CD4-positive, alpha-beta memory T cell (primary cell): ENCODE measurements at regions of chr17 and their contacts with region 1.

Region 1: DNA sequence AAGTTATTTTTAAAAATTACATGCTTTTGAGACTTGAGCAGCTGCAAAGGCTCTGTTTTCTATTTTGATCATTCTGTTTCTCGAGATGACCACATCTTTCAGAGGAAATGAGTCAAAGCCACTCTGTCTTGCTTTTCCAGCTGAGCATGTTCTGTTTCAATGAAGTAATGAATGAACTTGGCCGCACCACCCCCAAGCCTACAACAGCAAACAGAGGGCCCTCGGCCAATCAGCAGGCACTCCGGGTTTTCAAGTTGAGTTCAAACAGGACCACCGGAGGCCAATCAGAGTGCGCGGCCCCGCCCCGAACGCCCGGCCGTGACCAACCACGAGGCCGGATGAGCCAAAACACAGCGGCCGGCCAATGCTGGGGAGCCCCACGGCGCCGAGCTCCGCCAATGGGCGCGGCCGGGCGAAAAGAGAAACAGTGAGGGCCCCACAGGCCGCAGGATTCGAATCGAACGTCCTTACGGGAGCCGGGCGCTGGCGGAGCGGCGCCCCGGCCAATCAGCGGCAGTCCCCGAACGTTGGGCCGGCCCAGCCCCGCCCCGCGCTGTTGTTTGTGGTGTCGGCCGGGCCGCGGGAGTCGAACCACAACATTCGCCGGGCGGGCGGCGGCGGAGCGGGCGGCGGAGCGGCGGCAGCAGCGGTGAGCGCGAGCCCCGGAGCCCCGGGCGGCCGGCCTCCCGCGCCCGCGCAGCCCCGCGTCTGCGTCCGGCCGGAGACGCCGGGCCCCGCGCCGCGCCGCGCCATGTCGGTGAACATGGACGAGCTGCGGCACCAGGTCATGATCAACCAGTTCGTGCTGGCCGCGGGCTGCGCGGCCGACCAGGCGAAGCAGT is at the start of gene UBALD2:
- DNase-seq: peak; percentile 99
- H3K4me3 ChIP-seq: peak within 1 kb of the TSS; percentile 94 to 100
- H3K4me3 Mint-ChIP-seq: peak within 1 kb of the TSS; percentile 89 to 95 (median 92)
- H3K27ac ChIP-seq: peak within 1 kb of the TSS; percentile 82
- H3K27ac Mint-ChIP-seq: peak within 1 kb of the TSS; percentile 93 to 98 (median 96)
- H3K4me1 ChIP-seq: peaks cover 57% of the 10 kb centered on the region
- H3K4me1 Mint-ChIP-seq: peaks cover 33 to 69% (median 52%) of the 10 kb centered on the region in 4 donors
- H3K27me3 ChIP-seq: no peaks in the 10 kb centered on the region
- H3K27me3 Mint-ChIP-seq: no peaks in the 10 kb centered on the region
- total RNA-seq, gene UBALD2: 101 to 103 TPM

Region 2: DNA sequence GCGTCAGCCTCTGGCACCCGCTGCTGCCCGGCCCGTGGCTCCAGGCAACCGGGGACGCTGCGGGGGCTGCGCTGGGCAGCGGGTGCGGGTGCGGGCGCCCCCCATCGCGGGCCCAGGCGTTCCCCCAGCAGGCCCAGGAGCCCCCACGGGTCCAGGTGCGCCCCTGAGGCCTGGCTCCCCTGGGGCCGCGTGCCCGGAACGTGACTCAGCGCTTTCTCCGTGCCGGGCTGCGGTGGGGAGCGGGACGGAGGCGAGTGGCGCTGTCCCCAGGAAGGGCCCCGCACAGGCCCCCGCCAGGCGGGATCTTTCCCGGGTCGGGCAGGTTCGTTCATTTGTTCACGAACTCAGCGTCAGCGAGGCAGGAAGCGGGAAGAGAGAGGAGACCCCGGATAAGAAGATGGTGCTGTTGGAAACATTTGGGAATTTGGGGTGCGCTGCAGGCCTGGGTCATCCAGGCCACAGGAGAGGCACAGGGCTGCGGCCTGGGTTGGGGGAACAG is 143.0 kb before region 1 on chr17:
- CTCF ChIA-PET with region 1: interaction called, 8 read pairs
- POLR2A ChIA-PET with region 1: interaction called, 108 read pairs
- intact Hi-C with region 1: no loop called
- DNase-seq: no peak
- H3K4me3 ChIP-seq: peak overlapping the region in 1 of 2 donors; percentile 60
- H3K4me3 Mint-ChIP-seq: peak overlapping the region in 4 of 8 donors; percentile 21 to 49 (median 37)
- H3K27ac ChIP-seq: peak overlapping the region; percentile 29
- H3K27ac Mint-ChIP-seq: peak overlapping the region in 6 of 7 donors; percentile 21 to 86 (median 65)
- H3K4me1 ChIP-seq: peaks cover 10% of the 10 kb centered on the region
- H3K4me1 Mint-ChIP-seq: peaks cover 4 to 12% (median 8%) of the 10 kb centered on the region in 4 donors
- H3K27me3 ChIP-seq: no peaks in the 10 kb centered on the region
- H3K27me3 Mint-ChIP-seq: no peaks in the 10 kb centered on the region

Region 3: DNA sequence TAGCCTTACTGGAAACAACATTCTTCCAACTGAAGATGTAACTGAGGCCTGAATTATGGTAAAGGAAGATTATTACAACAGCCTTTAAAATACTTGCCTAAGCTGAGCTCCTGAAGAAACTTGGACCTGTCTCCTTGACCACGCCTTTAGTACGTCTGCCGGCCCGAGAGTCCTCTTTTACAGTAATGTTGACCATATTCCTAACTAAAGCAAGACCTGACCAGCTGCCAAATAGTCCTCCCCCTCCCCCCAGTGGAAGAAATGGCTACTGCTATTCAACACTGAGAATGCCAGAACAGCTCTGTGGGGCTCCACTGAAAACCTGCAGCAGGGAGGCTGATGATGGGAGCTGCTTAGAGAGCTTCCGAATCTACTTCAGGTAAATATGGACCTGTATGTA is 111.3 kb before region 1 on chr17:
- CTCF ChIA-PET with region 1: interaction called, 3 read pairs
- POLR2A ChIA-PET with region 1: interaction called, 25 read pairs
- intact Hi-C with region 1: no loop called
- DNase-seq: no peak
- H3K4me3 ChIP-seq: no peak overlapping the region
- H3K4me3 Mint-ChIP-seq: no peak overlapping the region
- H3K27ac ChIP-seq: no peak overlapping the region
- H3K27ac Mint-ChIP-seq: peak overlapping the region in 6 of 7 donors; percentile 22 to 79 (median 65)
- H3K4me1 ChIP-seq: peaks cover 24% of the 10 kb centered on the region
- H3K4me1 Mint-ChIP-seq: peaks cover 29 to 49% (median 35%) of the 10 kb centered on the region in 4 donors
- H3K27me3 ChIP-seq: no peaks in the 10 kb centered on the region
- H3K27me3 Mint-ChIP-seq: no peaks in the 10 kb centered on the region

Region 4: GRCh38 chr17:76204277-76204676 is 60.7 kb before region 1 on chr17:
- CTCF ChIA-PET with region 1: interaction called, 4 read pairs
- POLR2A ChIA-PET with region 1: interaction called, 80 read pairs
- intact Hi-C with region 1: no loop called
- DNase-seq: no peak
- H3K4me3 ChIP-seq: no peak overlapping the region
- H3K4me3 Mint-ChIP-seq: no peak overlapping the region
- H3K27ac ChIP-seq: no peak overlapping the region
- H3K27ac Mint-ChIP-seq: peak overlapping the region in 4 of 7 donors; percentile 53 to 70 (median 56)
- H3K4me1 ChIP-seq: peaks cover 73% of the 10 kb centered on the region
- H3K4me1 Mint-ChIP-seq: peaks cover 41 to 75% (median 63%) of the 10 kb centered on the region in 4 donors
- H3K27me3 ChIP-seq: no peaks in the 10 kb centered on the region
- H3K27me3 Mint-ChIP-seq: no peaks in the 10 kb centered on the region

Region 5: DNA sequence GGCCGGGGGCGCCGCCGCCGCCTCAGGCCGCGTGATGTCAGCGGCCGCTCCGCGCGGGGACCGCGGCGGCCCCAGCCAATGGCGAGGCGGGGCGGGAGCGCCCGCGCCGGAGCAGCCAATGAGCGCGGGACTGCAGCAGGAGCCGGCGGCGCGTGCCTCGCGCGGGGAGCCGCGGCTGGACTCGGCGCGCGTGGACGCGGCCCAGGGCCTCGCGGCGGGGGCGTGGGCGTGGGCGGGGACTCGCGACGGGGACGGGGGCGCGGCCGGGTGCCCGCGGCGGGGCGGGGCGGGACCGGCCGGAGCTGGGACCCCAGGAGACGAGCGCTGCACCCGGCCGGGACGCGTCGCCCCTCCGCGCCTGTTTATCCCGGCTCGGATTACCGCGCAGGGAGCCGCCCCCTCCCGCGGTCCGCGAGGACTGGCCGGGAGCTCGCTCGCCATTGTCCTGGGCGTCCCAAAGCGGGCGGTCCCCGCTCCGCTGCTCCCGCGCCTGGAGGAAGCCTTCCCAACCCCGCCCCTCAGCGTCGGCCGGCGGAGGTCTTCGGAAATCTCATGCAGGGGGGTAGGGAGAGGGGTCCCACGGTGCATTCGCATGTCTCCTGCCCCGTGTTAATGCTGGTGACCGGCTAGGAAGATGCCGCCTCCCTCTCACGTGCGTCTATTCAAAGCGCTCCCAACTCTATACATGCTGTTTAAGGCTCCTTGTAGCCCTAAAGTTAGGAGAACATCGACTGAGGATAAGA is 24.3 kb before region 1 on chr17 and contains the start of gene RNF157:
- CTCF ChIA-PET with region 1: interaction called, 5 read pairs
- POLR2A ChIA-PET with region 1: interaction called, 620 read pairs
- intact Hi-C with region 1: no loop called
- DNase-seq: peak; percentile 61 to 76 (median 72)
- H3K4me3 ChIP-seq: peak within 1 kb of the TSS; percentile 70 to 71
- H3K4me3 Mint-ChIP-seq: peak within 1 kb of the TSS; percentile 89 to 98 (median 92)
- H3K27ac ChIP-seq: peak within 1 kb of the TSS; percentile 50
- H3K27ac Mint-ChIP-seq: peak within 1 kb of the TSS; percentile 86 to 96 (median 93)
- H3K4me1 ChIP-seq: peaks cover 51% of the 10 kb centered on the region
- H3K4me1 Mint-ChIP-seq: peaks cover 19 to 72% (median 47%) of the 10 kb centered on the region in 4 donors
- H3K27me3 ChIP-seq: no peaks in the 10 kb centered on the region
- H3K27me3 Mint-ChIP-seq: no peaks in the 10 kb centered on the region
- total RNA-seq, gene RNF157: 19.5 to 22.5 TPM

Region 6: DNA sequence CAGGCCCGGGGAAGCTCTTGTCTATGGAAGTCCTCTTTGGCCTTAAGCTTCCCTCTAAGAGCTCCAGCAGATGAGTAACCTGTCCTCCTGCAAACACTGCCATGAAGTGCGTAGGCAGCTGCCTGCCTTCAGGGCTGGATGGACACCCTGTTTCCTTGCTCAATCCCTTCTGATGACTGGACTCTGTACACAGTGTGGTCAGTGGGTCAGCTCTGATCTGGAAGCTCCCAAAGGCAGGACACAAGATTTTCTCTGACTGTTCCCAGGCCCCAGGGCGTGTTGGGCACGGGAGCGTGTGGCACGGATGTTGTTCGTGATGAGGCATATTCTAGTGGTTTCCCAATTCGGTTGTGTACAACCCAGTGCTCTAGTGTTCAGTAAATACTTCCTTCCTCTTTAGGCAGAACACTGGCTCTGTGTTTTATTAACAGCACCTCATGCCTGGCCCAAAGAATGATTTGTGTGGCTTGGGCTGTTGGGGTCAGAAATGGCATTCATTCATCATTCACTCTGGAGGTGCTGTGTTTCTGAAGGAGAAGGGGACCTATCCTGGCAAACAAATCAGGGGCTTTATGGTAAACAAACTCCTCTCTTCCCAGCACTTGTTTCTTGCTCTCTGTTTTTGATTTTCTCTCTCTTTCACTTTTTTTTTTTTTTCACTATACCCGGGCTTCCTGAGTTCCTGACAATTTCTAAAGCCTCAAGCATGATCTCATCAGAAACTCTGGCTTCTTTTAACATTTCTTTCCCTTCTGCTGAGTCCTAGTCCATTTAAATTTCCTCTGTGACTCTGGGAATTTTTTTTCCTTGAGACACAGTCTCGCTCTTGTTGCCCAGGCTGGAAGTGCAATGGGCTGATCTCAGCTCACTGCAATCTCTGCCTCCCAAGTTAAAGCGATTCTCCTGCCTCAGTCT is 12.7 kb before region 1 on chr17:
- CTCF ChIA-PET with region 1: interaction called, 27 read pairs
- POLR2A ChIA-PET with region 1: interaction called, 620 read pairs
- intact Hi-C with region 1: no loop called
- DNase-seq: peak in 3 of 5 donors; percentile 55 to 57 (median 55)
- H3K4me3 ChIP-seq: peak overlapping the region; percentile 3 to 5
- H3K4me3 Mint-ChIP-seq: peak overlapping the region; percentile 69 to 89 (median 81)
- H3K27ac ChIP-seq: peak overlapping the region; percentile 51
- H3K27ac Mint-ChIP-seq: peak overlapping the region; percentile 82 to 97 (median 96)
- H3K4me1 ChIP-seq: peaks cover 68% of the 10 kb centered on the region
- H3K4me1 Mint-ChIP-seq: peaks cover 31 to 71% (median 53%) of the 10 kb centered on the region in 4 donors
- H3K27me3 ChIP-seq: no peaks in the 10 kb centered on the region
- H3K27me3 Mint-ChIP-seq: no peaks in the 10 kb centered on the region

Region 7: GRCh38 chr17:76327696-76328095 is 62.7 kb after region 1 on chr17:
- CTCF ChIA-PET with region 1: no interaction called
- POLR2A ChIA-PET with region 1: no interaction called
- intact Hi-C with region 1: no loop called
- DNase-seq: no peak
- H3K4me3 ChIP-seq: no peak overlapping the region
- H3K4me3 Mint-ChIP-seq: no peak overlapping the region
- H3K27ac ChIP-seq: no peak overlapping the region
- H3K27ac Mint-ChIP-seq: no peak overlapping the region
- H3K4me1 ChIP-seq: no peaks in the 10 kb centered on the region
- H3K4me1 Mint-ChIP-seq: peaks cover 0 to 5% (median 3%) of the 10 kb centered on the region in 4 donors
- H3K27me3 ChIP-seq: no peaks in the 10 kb centered on the region
- H3K27me3 Mint-ChIP-seq: no peaks in the 10 kb centered on the region